H1 (cell line): ENCODE measurements at regions of chr6 and their contacts with region 1.

Region 1: DNA sequence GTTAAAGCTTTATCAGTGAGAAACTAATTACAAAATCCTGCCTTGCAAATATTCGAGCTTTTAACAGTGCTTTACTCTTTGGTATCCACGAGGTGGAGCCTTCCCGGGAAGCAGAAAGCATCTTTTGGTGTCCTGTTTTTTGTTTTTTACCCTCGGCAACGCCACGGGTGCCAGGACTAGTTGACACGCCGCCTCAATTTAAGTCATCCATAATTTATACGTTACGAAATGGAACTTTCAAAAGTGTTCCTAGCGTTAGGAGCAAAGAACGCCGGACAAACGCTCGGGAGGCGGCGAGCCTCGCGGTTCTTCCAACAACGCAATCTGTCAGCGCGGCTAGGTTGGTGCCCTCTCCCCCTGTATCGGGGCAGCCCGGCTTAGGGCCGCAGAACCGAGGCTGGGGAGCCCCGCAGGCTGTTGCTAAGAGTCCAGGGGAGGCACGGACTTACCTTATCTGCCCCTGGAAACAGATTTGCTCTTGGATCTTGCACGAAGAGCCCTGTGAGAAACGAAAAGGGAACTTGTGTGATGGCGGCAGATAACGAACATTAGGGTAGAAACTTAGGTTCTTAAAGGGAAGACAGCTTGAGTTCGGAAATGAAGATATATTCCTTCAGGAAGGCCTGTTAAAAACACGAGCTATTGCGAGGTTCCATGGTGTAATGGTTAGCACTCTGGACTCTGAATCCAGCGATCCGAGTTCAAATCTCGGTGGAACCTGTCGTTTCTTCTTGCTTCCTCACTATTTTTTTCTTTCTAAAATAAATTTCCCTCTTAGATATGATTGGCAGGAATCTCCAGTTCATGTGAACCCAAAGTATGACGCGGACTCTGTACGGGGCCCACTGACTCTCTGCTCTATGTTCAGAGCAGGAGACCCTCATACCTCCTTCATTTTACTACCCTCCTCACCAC is 46.2 kb upstream of the ZNF184 start:
- DNase-seq: peak in 1 of 2 experiments; percentile 83
- H3K4me3 ChIP-seq: peak overlapping the region; percentile 75 to 99 (median 96)
- H3K27ac ChIP-seq: no peak overlapping the region
- H3K4me1 ChIP-seq: no peaks in the 10 kb centered on the region
- H3K27me3 ChIP-seq: peaks cover 3 to 8% (median 7%) of the 10 kb centered on the region in 4 experiments; a peak in 6 of 7 replicates
- CTCF ChIP-seq: peak; percentile 5 to 65 (median 57)
- EP300 ChIP-seq: no peak
- POLR2A ChIP-seq: 0 out of 3 replicates have a peak, but pooled peaks of 1 of the 2 experiments have one; percentile 18
- RAD21 ChIP-seq: peak; percentile 41 to 57

Region 2: GRCh38 chr6:27228963-27229477 is 290.1 kb before region 1 on chr6:
- CTCF ChIA-PET with region 1: no interaction called
- POLR2A ChIA-PET with region 1: no interaction called
- DNase-seq: no peak
- H3K4me3 ChIP-seq: peak overlapping the region; percentile 51 to 65 (median 59); a peak in 7 of 8 replicates
- H3K27ac ChIP-seq: no peak overlapping the region
- H3K4me1 ChIP-seq: peaks cover 0 to 4% (median 0%) of the 10 kb centered on the region in 4 experiments; a peak in 1 of 7 replicates
- H3K27me3 ChIP-seq: no peaks in the 10 kb centered on the region
- CTCF ChIP-seq: no peak
- EP300 ChIP-seq: no peak
- POLR2A ChIP-seq: no peak
- RAD21 ChIP-seq: no peak

Region 3: DNA sequence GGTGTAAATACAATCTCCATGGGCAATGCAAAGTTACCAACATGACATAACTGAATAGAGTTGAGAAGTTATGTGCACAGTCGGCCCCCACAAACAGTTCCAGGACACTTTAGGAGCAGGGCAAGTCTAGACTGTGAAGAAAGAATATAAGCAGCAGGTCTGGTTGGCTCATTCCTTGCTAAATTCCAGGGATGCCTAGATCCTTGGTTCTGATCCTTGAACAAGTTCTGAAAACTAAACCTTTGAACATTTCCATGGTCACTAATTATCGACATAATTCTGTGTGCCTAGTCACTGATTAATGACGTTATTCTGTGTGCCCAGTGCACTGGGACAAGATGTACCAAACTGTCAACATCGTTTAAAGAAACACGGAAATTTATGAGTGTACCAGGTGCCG is 58.4 kb before region 1 on chr6:
- CTCF ChIA-PET with region 1: no interaction called
- POLR2A ChIA-PET with region 1: no interaction called
- DNase-seq: no peak
- H3K4me3 ChIP-seq: no peak overlapping the region
- H3K27ac ChIP-seq: no peak overlapping the region
- H3K4me1 ChIP-seq: no peaks in the 10 kb centered on the region
- H3K27me3 ChIP-seq: no peaks in the 10 kb centered on the region
- CTCF ChIP-seq: no peak
- EP300 ChIP-seq: no peak
- POLR2A ChIP-seq: no peak
- RAD21 ChIP-seq: no peak

Region 4: GRCh38 chr6:27503436-27504030 is 15.6 kb before region 1 on chr6:
- CTCF ChIA-PET with region 1: interaction called, 45 read pairs
- POLR2A ChIA-PET with region 1: interaction called, 8 read pairs
- DNase-seq: peak in 1 of 2 experiments; percentile 96
- H3K4me3 ChIP-seq: peak overlapping the region; percentile 67 to 98 (median 94)
- H3K27ac ChIP-seq: no peak overlapping the region
- H3K4me1 ChIP-seq: peaks cover 0 to 8% (median 0%) of the 10 kb centered on the region in 4 experiments; a peak in 2 of 7 replicates
- H3K27me3 ChIP-seq: no peaks in the 10 kb centered on the region
- CTCF ChIP-seq: no peak
- EP300 ChIP-seq: no peak
- POLR2A ChIP-seq: no peak
- RAD21 ChIP-seq: no peak

Region 5: DNA sequence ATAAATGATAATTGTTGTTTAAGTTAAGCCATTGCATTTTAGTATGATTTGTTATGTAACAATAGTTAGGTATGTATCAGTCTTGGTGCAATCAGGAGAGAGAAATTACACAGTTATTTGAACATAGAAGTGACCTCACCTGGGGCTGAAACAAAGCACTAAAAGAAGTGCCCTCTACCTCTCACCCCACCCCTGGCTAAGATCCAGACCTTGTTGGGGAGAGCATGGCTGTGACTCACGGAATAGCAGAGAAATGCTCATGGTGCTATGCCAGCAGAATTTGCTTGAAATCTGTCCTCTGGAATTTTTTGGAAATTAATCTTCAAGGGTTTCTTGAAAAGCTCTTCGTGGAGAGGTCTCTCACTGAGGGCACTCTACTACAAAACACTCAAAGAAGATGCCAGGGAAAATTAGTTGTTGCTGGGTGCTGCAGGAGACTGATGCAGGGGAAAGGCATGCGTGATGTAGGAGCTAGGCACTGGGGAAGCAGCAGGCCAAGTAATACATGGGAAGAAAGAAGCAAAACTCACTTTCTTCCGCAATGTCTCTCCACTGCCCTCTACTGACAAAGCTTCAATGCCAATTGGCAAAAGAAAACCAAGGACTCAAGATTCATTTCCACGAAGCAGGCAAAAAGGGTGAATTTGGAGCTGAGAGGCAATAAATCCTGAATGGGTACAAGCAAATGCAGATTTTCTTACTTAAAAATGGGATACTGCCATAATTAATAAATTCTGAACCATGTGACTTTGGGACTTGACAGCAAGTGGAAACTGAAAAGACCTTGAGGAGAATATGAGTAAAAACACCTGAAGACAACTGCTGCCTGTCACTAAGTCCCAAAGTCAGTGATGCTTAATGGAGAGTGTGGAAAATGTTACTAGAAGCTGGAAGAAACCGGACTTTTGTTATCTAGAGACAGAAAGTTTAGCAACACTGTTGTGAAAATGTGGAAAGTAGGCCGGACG is 90.1 kb after region 1 on chr6:
- CTCF ChIA-PET with region 1: interaction called, 10 read pairs
- POLR2A ChIA-PET with region 1: interaction called, 3 read pairs
- DNase-seq: peak in 1 of 2 experiments; percentile 47
- H3K4me3 ChIP-seq: no peak overlapping the region
- H3K27ac ChIP-seq: no peak overlapping the region
- H3K4me1 ChIP-seq: no peaks in the 10 kb centered on the region
- H3K27me3 ChIP-seq: no peaks in the 10 kb centered on the region
- CTCF ChIP-seq: peak in 2 of 3 experiments; percentile 74 to 89; a peak in 3 of 4 replicates
- EP300 ChIP-seq: no peak
- POLR2A ChIP-seq: no peak
- RAD21 ChIP-seq: peak; percentile 82 to 86

Region 6: DNA sequence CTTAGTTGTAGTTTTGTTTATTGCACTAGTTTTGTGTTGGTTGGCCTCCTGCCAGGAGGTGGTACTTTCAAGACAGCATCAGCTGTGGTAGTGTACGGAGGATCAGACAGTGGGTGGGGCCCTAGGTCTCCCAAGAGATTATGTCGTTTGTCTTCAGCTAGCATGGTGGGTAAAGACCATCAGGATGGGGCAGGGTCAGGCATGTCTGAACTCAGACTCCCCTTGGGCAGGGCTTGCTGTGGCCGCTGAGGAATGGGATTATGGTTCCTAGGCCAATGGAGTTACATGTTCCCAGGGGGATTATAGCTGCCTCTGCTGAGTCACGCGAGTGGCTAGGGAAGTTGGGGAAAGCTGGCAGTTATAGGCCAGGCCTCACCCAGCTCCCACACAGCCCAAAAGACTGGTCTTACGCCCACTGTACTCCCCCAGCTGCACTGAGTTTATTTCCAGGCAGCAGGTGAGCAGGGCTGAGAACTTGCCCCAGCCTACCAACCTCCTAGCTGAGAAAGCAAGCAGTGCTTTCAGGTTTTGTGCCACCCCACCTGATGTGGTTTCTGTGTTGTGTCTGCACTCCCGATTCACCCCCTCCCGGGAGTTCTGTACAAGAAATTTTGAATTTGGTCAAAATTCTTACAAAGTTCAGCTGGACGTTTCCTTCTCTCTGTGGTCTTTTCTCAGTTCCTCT is 792.1 kb after region 1 on chr6:
- CTCF ChIA-PET with region 1: no interaction called
- POLR2A ChIA-PET with region 1: no interaction called
- DNase-seq: no peak
- H3K4me3 ChIP-seq: no peak overlapping the region
- H3K27ac ChIP-seq: no peak overlapping the region
- H3K4me1 ChIP-seq: peaks cover 0 to 1% (median 0%) of the 10 kb centered on the region in 4 experiments; a peak in 4 of 7 replicates
- H3K27me3 ChIP-seq: no peaks in the 10 kb centered on the region
- CTCF ChIP-seq: no peak
- EP300 ChIP-seq: no peak
- POLR2A ChIP-seq: no peak
- RAD21 ChIP-seq: no peak